ENCODE measurements at regions of chr22 and their contacts with region 1.

Region 1: DNA sequence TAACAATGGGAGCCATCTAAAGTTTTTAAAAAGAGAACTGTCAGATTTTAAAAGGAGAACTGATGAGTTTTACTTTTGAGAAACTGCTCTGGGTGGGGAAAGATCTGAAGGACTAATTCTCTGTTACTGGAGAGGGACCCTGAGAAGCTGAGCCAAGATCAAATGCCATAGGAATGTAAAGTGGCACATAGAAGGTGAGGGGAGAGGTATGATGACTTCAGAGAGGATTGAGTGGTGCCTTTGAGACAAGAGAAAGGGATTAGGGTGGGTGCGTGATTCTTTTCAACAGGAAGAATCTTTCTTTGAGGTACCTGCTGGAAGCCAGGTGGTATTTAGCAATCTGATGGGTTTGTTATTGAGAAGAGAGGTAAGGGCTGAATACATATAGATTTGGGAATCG is 9.0 kb downstream of the CRKL start:
- DNase-seq: peak; percentile 16
- ATAC-seq: no peak
- H3K4me3 ChIP-seq: no peak overlapping the region
- H3K4me3 Mint-ChIP-seq: peak overlapping the region; percentile 55
- H3K27ac ChIP-seq: peak overlapping the region in 1 of 2 donors; percentile 40
- H3K27ac Mint-ChIP-seq: peak overlapping the region; percentile 12
- H3K4me1 ChIP-seq: peaks cover 31 to 50% of the 10 kb centered on the region in 2 donors
- H3K4me1 Mint-ChIP-seq: peaks cover 53% of the 10 kb centered on the region
- H3K27me3 ChIP-seq: no peaks in the 10 kb centered on the region
- H3K27me3 Mint-ChIP-seq: no peaks in the 10 kb centered on the region
- CTCF ChIP-seq: no peak

Region 2: GRCh38 chr22:20940186-20940651 is 14.0 kb after region 1 on chr22:
- CTCF ChIA-PET with region 1: interaction called, 5 read pairs
- POLR2A ChIA-PET with region 1: no interaction called
- intact Hi-C with region 1: loop called (anchors 2 kb)
- DNase-seq: no peak
- ATAC-seq: no peak
- H3K4me3 ChIP-seq: no peak overlapping the region
- H3K4me3 Mint-ChIP-seq: no peak overlapping the region
- H3K27ac ChIP-seq: no peak overlapping the region
- H3K27ac Mint-ChIP-seq: no peak overlapping the region
- H3K4me1 ChIP-seq: peaks cover 18 to 19% of the 10 kb centered on the region in 2 donors
- H3K4me1 Mint-ChIP-seq: peaks cover 68% of the 10 kb centered on the region
- H3K27me3 ChIP-seq: no peaks in the 10 kb centered on the region
- H3K27me3 Mint-ChIP-seq: no peaks in the 10 kb centered on the region
- CTCF ChIP-seq: no peak

Region 3: GRCh38 chr22:21014202-21014725 is 88.0 kb after region 1 on chr22:
- CTCF ChIA-PET with region 1: no interaction called
- POLR2A ChIA-PET with region 1: no interaction called
- intact Hi-C with region 1: no loop called
- DNase-seq: peak; percentile 95
- ATAC-seq: peak; percentile 95
- H3K4me3 ChIP-seq: peak overlapping the region in 4 of 5 experiments; percentile 45 to 57 (median 52)
- H3K4me3 Mint-ChIP-seq: peak overlapping the region; percentile 94
- H3K27ac ChIP-seq: peak overlapping the region; percentile 73 to 74
- H3K27ac Mint-ChIP-seq: peak overlapping the region; percentile 91
- H3K4me1 ChIP-seq: peaks cover 14 to 24% of the 10 kb centered on the region in 2 donors
- H3K4me1 Mint-ChIP-seq: peaks cover 24% of the 10 kb centered on the region
- H3K27me3 ChIP-seq: no peaks in the 10 kb centered on the region
- H3K27me3 Mint-ChIP-seq: no peaks in the 10 kb centered on the region
- CTCF ChIP-seq: no peak

Region 4: GRCh38 chr22:21082248-21082647 is 156.0 kb after region 1 on chr22:
- CTCF ChIA-PET with region 1: no interaction called
- POLR2A ChIA-PET with region 1: no interaction called
- intact Hi-C with region 1: no loop called
- DNase-seq: no peak
- ATAC-seq: no peak
- H3K4me3 ChIP-seq: no peak overlapping the region
- H3K4me3 Mint-ChIP-seq: no peak overlapping the region
- H3K27ac ChIP-seq: no peak overlapping the region
- H3K27ac Mint-ChIP-seq: no peak overlapping the region
- H3K4me1 ChIP-seq: no peaks in the 10 kb centered on the region
- H3K4me1 Mint-ChIP-seq: no peaks in the 10 kb centered on the region
- H3K27me3 ChIP-seq: no peaks in the 10 kb centered on the region
- H3K27me3 Mint-ChIP-seq: peaks cover 6% of the 10 kb centered on the region
- CTCF ChIP-seq: no peak

Measured in B cell (primary cell).